CD4-positive, alpha-beta T cell (primary cell): ENCODE measurements at regions of chr20 and their contacts with region 1.

Region 1: GRCh38 chr20:16505894-16506293 is 67.4 kb downstream of the KIF16B start:
- DNase-seq: no peak
- ATAC-seq: no peak
- H3K4me3 ChIP-seq: no peak overlapping the region
- H3K4me3 Mint-ChIP-seq: no peak overlapping the region
- H3K27ac ChIP-seq: no peak overlapping the region
- H3K27ac Mint-ChIP-seq: no peak overlapping the region
- H3K4me1 ChIP-seq: no peaks in the 10 kb centered on the region
- H3K4me1 Mint-ChIP-seq: no peaks in the 10 kb centered on the region
- H3K27me3 ChIP-seq: no peaks in the 10 kb centered on the region
- H3K27me3 Mint-ChIP-seq: no peaks in the 10 kb centered on the region
- CTCF ChIP-seq: no peak

Region 2: DNA sequence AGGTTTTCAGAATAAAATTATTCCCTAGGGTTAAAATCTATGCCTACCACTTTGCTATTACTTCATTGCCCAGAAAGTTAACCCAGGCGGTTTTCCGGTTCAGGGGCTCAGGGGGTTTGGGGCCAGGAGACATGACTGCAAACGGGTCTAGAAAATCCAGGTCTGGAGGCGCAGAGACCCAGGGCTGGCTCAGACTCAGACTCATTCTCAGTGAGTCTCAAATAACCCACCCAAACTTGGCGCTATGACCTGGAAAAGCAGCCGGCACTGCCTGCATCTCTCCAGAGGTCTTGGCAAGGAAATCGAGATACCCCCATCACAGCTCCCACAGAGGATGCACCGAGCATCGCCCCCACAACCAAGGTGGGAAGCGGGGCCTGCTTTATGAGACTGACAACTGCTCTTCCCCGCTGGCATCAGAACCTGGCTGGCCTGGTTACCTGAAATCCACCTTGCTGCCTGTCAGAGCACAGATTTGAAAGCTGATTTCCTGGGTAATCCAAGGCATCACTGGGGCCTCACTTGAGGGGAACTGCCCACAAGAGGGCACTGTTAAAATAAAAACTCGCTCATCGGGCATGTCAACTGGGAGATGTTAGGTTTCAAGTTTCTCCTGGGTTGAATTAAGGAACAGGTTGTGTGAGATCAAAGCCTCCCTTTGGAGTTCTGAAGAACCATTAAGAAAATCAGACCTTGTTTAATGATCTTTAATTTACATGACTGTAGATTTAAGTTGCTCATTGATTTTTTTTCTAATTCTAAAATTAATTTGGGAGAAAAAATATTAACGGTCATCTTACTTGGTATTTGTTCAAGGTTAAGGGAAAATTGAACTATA is 12.3 kb after region 1 on chr20:
- CTCF ChIA-PET with region 1: no interaction called
- POLR2A ChIA-PET with region 1: no interaction called
- intact Hi-C with region 1: loop called in 1 of 2 experiments (anchors 1 kb)
- DNase-seq: peak in 5 of 14 experiments; percentile 3 to 37 (median 31)
- ATAC-seq: no peak
- H3K4me3 ChIP-seq: no peak overlapping the region
- H3K4me3 Mint-ChIP-seq: no peak overlapping the region
- H3K27ac ChIP-seq: no peak overlapping the region
- H3K27ac Mint-ChIP-seq: no peak overlapping the region
- H3K4me1 ChIP-seq: no peaks in the 10 kb centered on the region
- H3K4me1 Mint-ChIP-seq: peaks cover 5% of the 10 kb centered on the region
- H3K27me3 ChIP-seq: no peaks in the 10 kb centered on the region
- H3K27me3 Mint-ChIP-seq: no peaks in the 10 kb centered on the region
- CTCF ChIP-seq: peak; percentile 55